H1 (cell line): ENCODE measurements at regions of chr11 and their contacts with region 1.

Region 1: GRCh38 chr11:44556735-44557409 is 8.6 kb upstream of the CD82 start:
- DNase-seq: peak in 1 of 2 experiments; percentile 71
- H3K4me3 ChIP-seq: no peak overlapping the region
- H3K27ac ChIP-seq: no peak overlapping the region
- H3K4me1 ChIP-seq: peaks cover 6 to 16% (median 12%) of the 10 kb centered on the region in 4 experiments; a peak in 6 of 7 replicates
- H3K27me3 ChIP-seq: peaks cover 0 to 2% (median 0%) of the 10 kb centered on the region in 4 experiments; a peak in 1 of 7 replicates
- CTCF ChIP-seq: peak; percentile 63 to 72 (median 71)
- EP300 ChIP-seq: no peak
- POLR2A ChIP-seq: no peak
- RAD21 ChIP-seq: peak; percentile 83 to 85

Region 2: DNA sequence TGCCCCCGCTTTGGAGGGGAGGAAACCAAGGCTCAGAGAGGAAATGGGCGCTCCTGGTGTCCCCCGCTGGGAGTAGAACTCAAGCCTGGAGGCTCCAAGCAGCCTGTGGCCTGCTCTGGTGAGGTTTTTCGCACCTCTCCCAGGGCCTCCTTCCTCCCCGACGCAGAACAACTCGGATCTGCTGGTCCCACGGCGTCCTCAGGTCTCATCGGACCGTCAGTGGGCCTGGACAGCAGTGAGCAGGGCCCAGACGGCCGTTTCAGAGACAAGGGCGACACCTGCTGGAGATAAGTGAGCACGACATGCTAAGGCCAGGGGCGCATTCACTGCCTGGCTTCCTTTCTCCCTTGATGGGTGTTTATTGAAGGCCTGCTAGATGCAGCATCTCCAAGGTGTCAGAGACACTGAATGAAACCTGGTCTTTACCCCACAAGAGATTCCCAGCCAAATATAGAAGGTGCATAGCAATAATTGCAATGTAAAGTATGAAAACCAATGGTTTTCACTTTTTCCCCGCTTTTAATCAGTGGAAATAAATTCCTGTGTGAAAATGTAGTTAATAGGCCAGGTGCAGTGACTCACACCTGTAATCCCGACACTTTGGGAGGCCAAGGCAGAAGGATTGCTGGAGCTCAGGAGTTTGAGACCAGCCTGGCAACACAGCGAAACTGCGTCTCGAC is 18.4 kb before region 1 on chr11:
- CTCF ChIA-PET with region 1: interaction called, 21 read pairs
- POLR2A ChIA-PET with region 1: no interaction called
- DNase-seq: peak; percentile 46 to 92
- H3K4me3 ChIP-seq: no peak overlapping the region
- H3K27ac ChIP-seq: no peak overlapping the region
- H3K4me1 ChIP-seq: peaks cover 2 to 11% (median 3%) of the 10 kb centered on the region in 4 experiments; a peak in 6 of 7 replicates
- H3K27me3 ChIP-seq: peaks cover 0 to 6% (median 3%) of the 10 kb centered on the region in 4 experiments; a peak in 3 of 7 replicates
- CTCF ChIP-seq: peak; percentile 95 to 98 (median 96)
- EP300 ChIP-seq: no peak
- POLR2A ChIP-seq: no peak
- RAD21 ChIP-seq: peak; percentile 99 to 100

Region 3: DNA sequence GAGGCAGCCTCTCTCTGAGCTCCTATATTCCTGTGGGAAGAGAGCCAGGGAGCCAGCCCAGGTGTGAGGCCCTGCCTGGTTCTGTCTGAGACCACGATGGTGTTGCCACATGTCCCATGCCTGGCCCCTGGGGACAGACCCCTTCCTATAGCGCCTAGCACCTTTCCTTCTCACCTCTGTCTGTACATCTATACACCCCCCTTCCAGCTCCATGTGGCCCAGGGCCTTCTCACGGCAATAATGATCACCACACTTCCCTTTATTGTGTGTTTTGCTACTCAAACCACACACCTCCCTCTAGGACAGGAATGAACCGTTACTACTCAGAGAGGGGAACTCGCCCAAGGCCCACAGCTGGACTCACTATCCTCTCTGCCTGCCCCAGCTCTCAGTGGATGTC is 21.4 kb after region 1 on chr11:
- CTCF ChIA-PET with region 1: interaction called, 14 read pairs
- POLR2A ChIA-PET with region 1: no interaction called
- DNase-seq: no peak
- H3K4me3 ChIP-seq: no peak overlapping the region
- H3K27ac ChIP-seq: no peak overlapping the region
- H3K4me1 ChIP-seq: peaks cover 0 to 2% (median 0%) of the 10 kb centered on the region in 4 experiments; a peak in 2 of 7 replicates
- H3K27me3 ChIP-seq: no peaks in the 10 kb centered on the region
- CTCF ChIP-seq: no peak
- EP300 ChIP-seq: no peak
- POLR2A ChIP-seq: no peak
- RAD21 ChIP-seq: no peak

Region 4: GRCh38 chr11:44596525-44597276 is 39.8 kb after region 1 on chr11:
- CTCF ChIA-PET with region 1: interaction called, 56 read pairs
- POLR2A ChIA-PET with region 1: interaction called, 3 read pairs
- DNase-seq: no peak
- H3K4me3 ChIP-seq: no peak overlapping the region
- H3K27ac ChIP-seq: no peak overlapping the region
- H3K4me1 ChIP-seq: peaks cover 0 to 11% (median 2%) of the 10 kb centered on the region in 4 experiments; a peak in 3 of 7 replicates
- H3K27me3 ChIP-seq: no peaks in the 10 kb centered on the region
- CTCF ChIP-seq: no peak
- EP300 ChIP-seq: no peak
- POLR2A ChIP-seq: no peak
- RAD21 ChIP-seq: no peak